HEK293 (cell line): ENCODE measurements at regions of chr20 and their contacts with region 1.

Region 1: GRCh38 chr20:21571841-21572690 is 58.2 kb upstream of the NKX2-2 start:
- H3K4me3 ChIP-seq: no peak overlapping the region
- H3K27ac ChIP-seq: no peak overlapping the region
- H3K4me1 ChIP-seq: no peaks in the 10 kb centered on the region
- CTCF ChIP-seq: peak; percentile 50

Region 2: DNA sequence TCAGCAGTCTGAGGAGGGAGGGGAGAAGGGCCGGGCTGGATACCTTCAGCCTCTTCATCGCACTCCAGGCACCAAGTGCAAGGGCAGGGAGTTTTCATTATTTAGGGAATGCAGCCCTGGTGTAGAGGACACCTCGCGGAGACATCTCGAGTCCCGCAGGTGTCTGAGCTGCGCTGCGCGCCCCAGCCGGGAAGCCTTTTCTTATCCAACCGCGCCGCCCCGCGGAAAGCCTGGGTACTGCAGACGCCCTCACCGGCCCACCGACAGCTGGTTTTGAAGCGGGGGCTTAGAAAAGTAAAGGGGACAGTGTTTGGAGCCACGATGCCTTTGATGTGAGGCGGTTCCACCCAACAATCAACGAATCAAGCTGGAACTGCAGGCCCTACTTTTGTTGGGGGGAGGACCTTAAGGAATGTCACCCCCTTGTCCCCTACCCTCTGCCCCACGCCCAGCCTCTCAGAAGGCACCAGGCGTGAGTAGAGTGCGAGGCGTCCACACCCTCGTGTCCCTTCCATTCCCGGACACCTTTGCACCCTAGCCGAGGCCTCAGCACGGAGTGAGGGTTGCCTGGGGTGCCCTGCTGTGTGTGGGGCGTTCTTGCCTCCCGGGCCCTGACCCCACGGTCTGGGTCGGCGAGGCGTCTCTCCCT is 66.8 kb before region 1 on chr20:
- CTCF ChIA-PET with region 1: interaction called, 10 read pairs
- POLR2A ChIA-PET with region 1: no interaction called
- H3K4me3 ChIP-seq: peak overlapping the region; percentile 53
- H3K27ac ChIP-seq: peak overlapping the region; percentile 56; the same call in 1 of the 2 replicates
- H3K4me1 ChIP-seq: no peaks in the 10 kb centered on the region
- CTCF ChIP-seq: peak; percentile 89

Region 3: GRCh38 chr20:21529863-21530262 is 42.2 kb before region 1 on chr20:
- CTCF ChIA-PET with region 1: interaction called, 32 read pairs
- POLR2A ChIA-PET with region 1: no interaction called
- H3K4me3 ChIP-seq: no peak overlapping the region
- H3K27ac ChIP-seq: no peak overlapping the region
- H3K4me1 ChIP-seq: no peaks in the 10 kb centered on the region
- CTCF ChIP-seq: no peak

Region 4: DNA sequence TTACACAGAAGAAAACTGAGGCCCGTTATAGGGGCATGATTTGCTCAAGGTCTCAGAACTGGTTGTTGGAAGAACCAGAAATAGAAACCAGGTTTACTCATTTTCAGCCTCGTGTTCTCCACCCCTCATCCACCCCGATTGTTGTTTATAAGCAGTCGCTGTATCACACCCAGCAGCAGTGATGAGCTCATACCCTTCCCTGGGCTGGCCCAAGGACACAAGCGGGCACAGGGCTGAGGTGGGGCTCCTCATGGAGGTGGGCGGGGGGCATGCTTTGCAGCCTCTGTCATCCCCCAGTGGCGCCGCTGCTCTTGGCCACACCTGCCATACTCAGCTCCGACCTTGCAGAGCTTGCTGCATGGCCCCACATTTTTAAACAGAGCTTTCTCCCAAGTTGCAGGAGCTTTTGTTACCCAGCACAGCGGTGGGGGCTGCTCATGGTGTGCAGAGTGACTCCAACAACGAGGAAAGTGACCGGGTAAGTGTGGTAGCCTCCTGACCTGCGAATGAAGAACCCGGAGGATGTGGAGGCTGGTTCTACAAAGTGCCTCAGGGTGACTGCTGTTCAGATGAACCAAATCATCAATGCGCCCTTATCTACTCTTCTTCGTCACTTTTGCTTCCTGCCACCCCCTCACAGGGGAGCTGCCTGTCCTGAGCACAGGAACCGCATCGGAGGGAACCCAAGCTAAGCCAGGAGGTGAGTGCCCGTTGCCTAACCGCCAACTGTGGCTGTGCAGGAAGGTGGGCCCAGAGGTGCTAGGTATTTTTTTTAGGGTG is 14.6 kb before region 1 on chr20:
- CTCF ChIA-PET with region 1: interaction called, 25 read pairs
- POLR2A ChIA-PET with region 1: no interaction called
- H3K4me3 ChIP-seq: no peak overlapping the region
- H3K27ac ChIP-seq: no peak overlapping the region
- H3K4me1 ChIP-seq: no peaks in the 10 kb centered on the region
- CTCF ChIP-seq: no peak

Region 5: DNA sequence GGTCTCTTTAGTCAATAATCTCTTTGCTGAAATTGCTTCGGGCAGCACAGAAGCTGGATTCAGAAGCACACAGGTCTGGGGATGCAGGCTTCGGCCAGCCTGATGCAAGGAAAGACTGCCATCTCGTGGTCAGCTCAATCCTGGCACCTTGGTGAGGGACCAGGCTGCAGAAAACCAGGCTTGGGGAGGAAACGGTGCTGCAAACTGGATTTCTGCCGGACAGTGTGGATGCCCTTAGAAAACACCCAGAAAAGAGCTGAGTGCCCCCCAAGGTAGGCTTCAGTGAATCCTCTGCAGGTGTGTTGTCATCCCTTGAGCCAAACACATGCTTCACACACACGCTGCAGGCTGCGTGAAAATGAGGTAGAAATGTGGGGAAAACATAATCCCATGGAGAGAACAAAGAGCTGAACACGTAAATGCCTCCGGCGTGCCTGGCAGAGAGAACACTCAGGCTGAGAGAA is 43.6 kb after region 1 on chr20:
- CTCF ChIA-PET with region 1: interaction called, 26 read pairs
- POLR2A ChIA-PET with region 1: no interaction called
- H3K4me3 ChIP-seq: no peak overlapping the region
- H3K27ac ChIP-seq: no peak overlapping the region
- H3K4me1 ChIP-seq: 0 out of 2 replicates have a peak, but pooled peaks cover 4% of the 10 kb centered on the region
- CTCF ChIP-seq: peak; percentile 75

Region 6: GRCh38 chr20:21640561-21641182 is 68.6 kb after region 1 on chr20:
- CTCF ChIA-PET with region 1: no interaction called
- POLR2A ChIA-PET with region 1: no interaction called
- H3K4me3 ChIP-seq: no peak overlapping the region
- H3K27ac ChIP-seq: no peak overlapping the region
- H3K4me1 ChIP-seq: no peaks in the 10 kb centered on the region
- CTCF ChIP-seq: peak; percentile 50; the same call in 1 of the 2 replicates